Uterus (tissue), 4 donors: ENCODE measurements at regions of chr21 and their contacts with region 1.

Region 1: GRCh38 chr21:32569261-32570230 is 15.8 kb downstream of the TCP10L start:
- DNase-seq: peak; percentile 80 to 84
- H3K4me3 ChIP-seq: peak overlapping the region; percentile 48 to 51
- H3K27ac ChIP-seq: peak overlapping the region; percentile 92 to 94
- H3K4me1 ChIP-seq: no peaks in the 10 kb centered on the region
- H3K27me3 ChIP-seq: no peaks in the 10 kb centered on the region
- CTCF ChIP-seq: peak; percentile 72 to 82 (median 76)
- POLR2A ChIP-seq: peak; percentile 11 to 54

Region 2: GRCh38 chr21:32403201-32403777 is 166.3 kb before region 1 on chr21:
- intact Hi-C with region 1: loop called (anchors 10 kb)
- DNase-seq: peak; percentile 70 to 86
- H3K4me3 ChIP-seq: no peak overlapping the region
- H3K27ac ChIP-seq: peak overlapping the region; percentile 58 to 61
- H3K4me1 ChIP-seq: peaks cover 0 to 4% of the 10 kb centered on the region in 2 donors
- H3K27me3 ChIP-seq: no peaks in the 10 kb centered on the region
- CTCF ChIP-seq: peak; percentile 80 to 85 (median 84)
- POLR2A ChIP-seq: no peak